Activated naive CD8-positive, alpha-beta T cell treated with anti-CD3 and anti-CD28 coated beads, Interleukin-2, amount 10 ng/mL, durations not matched to agents 7 days and 5 days (primary cell): ENCODE measurements at regions of chr11 and their contacts with region 1.

Region 1: DNA sequence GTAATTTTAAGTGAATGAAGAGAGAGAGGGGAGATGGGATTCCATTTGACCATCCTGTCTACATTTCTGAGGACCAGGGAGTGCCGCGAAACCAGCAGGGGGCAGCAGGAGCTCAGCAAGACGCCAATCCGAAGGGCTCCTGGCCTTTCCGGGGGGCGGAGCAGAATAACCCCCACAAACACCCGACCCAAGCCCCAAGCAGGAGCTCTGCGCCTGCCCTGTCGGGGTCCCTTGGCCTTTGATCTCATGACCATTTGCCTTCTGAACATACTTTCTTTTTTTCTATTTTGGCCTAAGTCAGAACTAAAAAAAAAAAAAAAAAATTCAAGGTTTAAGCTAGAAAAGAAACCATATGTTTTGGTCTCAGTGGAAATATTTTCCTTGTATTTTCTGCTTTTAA is 21.9 kb upstream of the SCN2B start:
- DNase-seq: peak; percentile 88
- ATAC-seq: peak; percentile 15
- H3K4me3 Mint-ChIP-seq: peak overlapping the region; percentile 39
- H3K27ac Mint-ChIP-seq: peak overlapping the region; percentile 85
- H3K4me1 Mint-ChIP-seq: peaks cover 15% of the 10 kb centered on the region
- H3K27me3 Mint-ChIP-seq: no peaks in the 10 kb centered on the region

Region 2: DNA sequence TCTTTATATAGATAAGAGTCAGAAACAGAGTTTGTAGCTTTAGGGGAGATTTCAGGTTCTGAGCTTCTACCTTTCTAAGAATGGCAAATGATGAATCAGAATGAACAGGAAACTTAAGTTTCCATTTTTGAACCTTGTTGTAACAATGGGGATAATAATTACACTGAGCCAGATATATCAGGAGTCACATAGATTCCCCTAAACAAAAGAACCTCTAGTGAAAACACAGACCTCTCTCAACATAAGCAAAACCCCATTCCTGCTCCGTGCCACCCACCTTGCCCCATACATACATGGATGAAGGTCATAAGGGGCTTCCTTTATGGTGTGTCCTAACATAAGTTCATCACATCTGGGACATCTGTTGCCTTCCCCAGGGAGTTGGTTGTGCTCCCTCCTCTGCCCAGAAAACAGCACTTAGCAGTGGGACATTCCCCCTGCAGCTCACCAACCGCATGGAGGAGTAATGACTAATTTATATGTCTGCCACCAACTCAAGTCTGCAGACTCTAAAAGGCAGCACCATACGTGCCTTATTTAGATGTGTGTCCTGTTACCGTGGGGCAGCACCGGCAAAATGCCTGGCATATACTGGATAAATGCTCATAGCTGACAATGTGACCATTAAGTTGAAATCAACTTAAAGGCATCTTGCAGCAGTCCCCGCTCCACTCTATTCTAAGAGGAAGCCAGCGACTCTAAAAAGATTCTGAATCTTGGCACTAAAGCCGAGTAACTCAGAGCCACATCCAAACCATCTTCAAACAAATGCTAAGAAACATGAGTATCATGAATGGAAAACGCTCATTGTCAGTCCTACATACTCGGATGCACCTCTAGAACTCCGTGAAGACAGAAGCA is 18.5 kb after region 1 on chr11:
- POLR2A ChIA-PET with region 1: interaction called, 118 read pairs
- DNase-seq: no peak
- ATAC-seq: peak; percentile 50
- H3K4me3 Mint-ChIP-seq: peak overlapping the region; percentile 82
- H3K27ac Mint-ChIP-seq: peak overlapping the region; percentile 95
- H3K4me1 Mint-ChIP-seq: peaks cover 91% of the 10 kb centered on the region
- H3K27me3 Mint-ChIP-seq: no peaks in the 10 kb centered on the region

Region 3: DNA sequence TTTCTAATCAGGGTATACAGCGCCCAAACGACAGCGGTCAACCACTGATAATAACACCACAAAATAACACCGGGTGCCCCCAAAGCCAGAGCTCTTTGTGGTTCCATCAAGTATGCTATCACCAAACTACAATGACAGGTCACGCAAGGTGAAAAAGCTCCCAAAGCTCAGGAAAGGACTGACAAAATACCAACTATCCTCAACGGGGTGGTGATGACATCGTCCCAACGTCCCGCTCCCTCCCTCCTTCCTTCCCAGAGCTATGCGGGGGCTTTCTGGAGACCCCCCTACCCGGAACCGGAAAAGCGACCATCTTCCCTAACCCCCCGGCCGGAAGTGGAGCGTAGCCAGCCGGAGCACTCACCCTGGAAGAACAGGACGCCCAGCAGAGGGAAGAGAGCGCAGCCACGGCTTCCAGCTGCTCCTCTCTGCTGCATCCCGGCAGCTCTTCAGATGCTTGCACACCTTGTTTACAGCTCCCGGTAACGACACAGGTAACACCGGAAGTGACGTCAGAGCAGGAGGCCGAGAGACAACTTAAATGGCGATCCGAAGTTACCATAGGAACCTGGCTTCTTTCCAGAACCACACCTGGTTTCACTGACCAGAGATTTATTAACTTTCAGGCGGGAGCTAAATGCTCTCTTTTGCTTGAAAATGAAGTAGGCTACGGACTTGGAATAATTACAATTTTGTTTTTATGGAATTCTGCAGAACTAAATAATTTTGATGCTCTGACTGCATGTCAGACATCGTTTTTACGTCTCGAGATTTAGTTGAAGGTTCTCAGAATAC is 53.7 kb after region 1 on chr11 and contains the start of gene MPZL3:
- POLR2A ChIA-PET with region 1: interaction called, 14 read pairs
- DNase-seq: peak; percentile 83
- ATAC-seq: peak; percentile 71
- H3K4me3 Mint-ChIP-seq: peak within 1 kb of the TSS; percentile 95
- H3K27ac Mint-ChIP-seq: peak within 1 kb of the TSS; percentile 98
- H3K4me1 Mint-ChIP-seq: peaks cover 30% of the 10 kb centered on the region
- H3K27me3 Mint-ChIP-seq: no peaks in the 10 kb centered on the region
- total RNA-seq, gene MPZL3: 24.5 to 29.8 TPM

Region 4: GRCh38 chr11:118290923-118291322 is 92.6 kb after region 1 on chr11:
- POLR2A ChIA-PET with region 1: interaction called, 11 read pairs
- DNase-seq: no peak
- ATAC-seq: peak; percentile 79
- H3K4me3 Mint-ChIP-seq: no peak overlapping the region
- H3K27ac Mint-ChIP-seq: peak overlapping the region; percentile 7
- H3K4me1 Mint-ChIP-seq: peaks cover 16% of the 10 kb centered on the region
- H3K27me3 Mint-ChIP-seq: peaks cover 2% of the 10 kb centered on the region

Region 5: GRCh38 chr11:118338637-118339061 is 140.3 kb after region 1 on chr11:
- POLR2A ChIA-PET with region 1: interaction called, 14 read pairs
- DNase-seq: peak; percentile 85
- ATAC-seq: peak; percentile 65
- H3K4me3 Mint-ChIP-seq: peak overlapping the region; percentile 89
- H3K27ac Mint-ChIP-seq: peak overlapping the region; percentile 97
- H3K4me1 Mint-ChIP-seq: peaks cover 56% of the 10 kb centered on the region
- H3K27me3 Mint-ChIP-seq: no peaks in the 10 kb centered on the region